BJ (cell line): ENCODE measurements at regions of chr4 and their contacts with region 1.

Region 1: GRCh38 chr4:129362674-129363274 is 266.8 kb downstream of the C4orf33 start:
- DNase-seq: peak; percentile 5
- H3K4me3 ChIP-seq: no peak overlapping the region
- H3K27me3 ChIP-seq: no peaks in the 10 kb centered on the region; the same call in 1 of the 2 replicates
- CTCF ChIP-seq: peak; percentile 85

Region 2: GRCh38 chr4:129344058-129344457 is 18.7 kb before region 1 on chr4:
- CTCF ChIA-PET with region 1: interaction called, 10 read pairs
- POLR2A ChIA-PET with region 1: no interaction called
- DNase-seq: no peak
- H3K4me3 ChIP-seq: no peak overlapping the region
- H3K27me3 ChIP-seq: no peaks in the 10 kb centered on the region
- CTCF ChIP-seq: peak; percentile 50; the same call in 1 of the 2 replicates

Region 3: GRCh38 chr4:129641179-129641578 is 278.4 kb after region 1 on chr4:
- CTCF ChIA-PET with region 1: interaction called, 41 read pairs
- POLR2A ChIA-PET with region 1: no interaction called
- DNase-seq: no peak
- H3K4me3 ChIP-seq: no peak overlapping the region
- H3K27me3 ChIP-seq: no peaks in the 10 kb centered on the region
- CTCF ChIP-seq: peak; percentile 61